Natural killer cell (primary cell): ENCODE measurements at regions of chr19 and their contacts with region 1.

Region 1: GRCh38 chr19:47707135-47707925 is 5.9 kb upstream of the EHD2 start:
- DNase-seq: peak; percentile 66 to 86
- ATAC-seq: peak; percentile 82 to 99 (median 96)
- H3K4me3 ChIP-seq: no peak overlapping the region
- H3K4me3 Mint-ChIP-seq: no peak overlapping the region
- H3K27ac ChIP-seq: no peak overlapping the region
- H3K27ac Mint-ChIP-seq: no peak overlapping the region
- H3K4me1 ChIP-seq: peaks cover 5% of the 10 kb centered on the region
- H3K4me1 Mint-ChIP-seq: peaks cover 9% of the 10 kb centered on the region in 2 donors
- H3K27me3 ChIP-seq: peaks cover 5% of the 10 kb centered on the region
- H3K27me3 Mint-ChIP-seq: peaks cover 7 to 15% of the 10 kb centered on the region in 2 donors
- CTCF ChIP-seq: peak; percentile 83

Region 2: GRCh38 chr19:47742634-47743033 is 35.3 kb after region 1 on chr19:
- intact Hi-C with region 1: loop called (anchors 2 kb)
- DNase-seq: no peak
- ATAC-seq: no peak
- H3K4me3 ChIP-seq: no peak overlapping the region
- H3K4me3 Mint-ChIP-seq: peak overlapping the region; percentile 35
- H3K27ac ChIP-seq: no peak overlapping the region
- H3K27ac Mint-ChIP-seq: no peak overlapping the region
- H3K4me1 ChIP-seq: peaks cover 32% of the 10 kb centered on the region
- H3K4me1 Mint-ChIP-seq: peaks cover 7 to 8% of the 10 kb centered on the region in 2 donors
- H3K27me3 ChIP-seq: no peaks in the 10 kb centered on the region
- H3K27me3 Mint-ChIP-seq: no peaks in the 10 kb centered on the region
- CTCF ChIP-seq: no peak